ENCODE measurements at regions of chr12 and their contacts with region 1.

Region 1: GRCh38 chr12:114166362-114166761 is 200.2 kb upstream of the RBM19 start:
- DNase-seq: peak; percentile 38 to 71
- H3K4me3 ChIP-seq: no peak overlapping the region
- H3K27ac ChIP-seq: no peak overlapping the region
- H3K4me1 ChIP-seq: 0 out of 7 replicates have a peak, but pooled peaks cover 0 to 2% (median 0%) of the 10 kb centered on the region in 4 experiments
- H3K27me3 ChIP-seq: peaks cover 0 to 12% (median 3%) of the 10 kb centered on the region in 4 experiments; a peak in 4 of 7 replicates
- CTCF ChIP-seq: peak; percentile 62 to 86 (median 78)
- EP300 ChIP-seq: no peak
- POLR2A ChIP-seq: no peak
- RAD21 ChIP-seq: peak; percentile 94 to 97

Region 2: DNA sequence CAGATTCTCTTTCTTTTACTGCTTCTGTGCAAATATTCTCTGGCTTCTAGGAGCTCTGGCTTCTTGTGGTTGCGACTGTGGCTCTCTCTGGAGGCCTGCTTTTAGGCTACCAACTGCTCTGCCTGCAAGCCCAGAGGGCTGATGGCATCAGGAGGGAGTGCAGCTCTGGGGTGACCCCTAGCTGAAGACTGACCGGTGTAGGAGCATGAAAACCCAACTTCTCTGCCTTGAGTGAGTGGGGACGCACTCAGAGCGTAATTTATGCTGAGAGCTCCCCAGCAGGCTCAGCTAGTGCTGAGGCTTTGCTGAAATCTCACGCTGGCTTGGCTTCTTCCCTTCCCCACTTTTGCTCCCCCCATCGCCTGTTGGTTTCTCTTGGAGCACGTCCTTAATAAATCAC is 170.3 kb before region 1 on chr12:
- CTCF ChIA-PET with region 1: interaction called, 11 read pairs
- POLR2A ChIA-PET with region 1: no interaction called
- DNase-seq: peak; percentile 23 to 55
- H3K4me3 ChIP-seq: no peak overlapping the region
- H3K27ac ChIP-seq: no peak overlapping the region
- H3K4me1 ChIP-seq: no peaks in the 10 kb centered on the region
- H3K27me3 ChIP-seq: no peaks in the 10 kb centered on the region
- CTCF ChIP-seq: peak; percentile 52 to 77 (median 64)
- EP300 ChIP-seq: no peak
- POLR2A ChIP-seq: no peak
- RAD21 ChIP-seq: peak; percentile 57 to 68

Region 3: DNA sequence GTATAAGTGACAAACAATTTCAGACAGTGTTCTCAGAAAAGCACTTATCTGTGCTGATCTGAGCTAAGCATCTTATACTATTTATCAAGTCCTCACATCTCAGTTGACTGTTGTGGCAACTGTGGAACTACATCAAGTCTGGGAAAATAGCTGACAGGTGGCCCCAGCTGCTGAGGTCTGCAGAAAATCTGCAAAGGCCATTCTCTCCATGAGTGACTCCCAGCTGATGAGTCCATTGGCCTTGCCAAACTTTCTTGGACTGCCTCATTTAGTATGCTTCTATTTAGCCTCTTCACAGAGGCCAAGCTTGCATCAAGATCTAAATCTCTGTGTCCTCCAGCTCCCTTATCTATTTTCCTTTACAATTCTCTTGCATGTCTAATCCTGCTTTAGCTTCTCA is 25.8 kb before region 1 on chr12:
- CTCF ChIA-PET with region 1: interaction called, 13 read pairs
- POLR2A ChIA-PET with region 1: no interaction called
- DNase-seq: no peak
- H3K4me3 ChIP-seq: no peak overlapping the region
- H3K27ac ChIP-seq: no peak overlapping the region
- H3K4me1 ChIP-seq: no peaks in the 10 kb centered on the region
- H3K27me3 ChIP-seq: peaks cover 0 to 9% (median 1%) of the 10 kb centered on the region in 4 experiments; a peak in 4 of 7 replicates
- CTCF ChIP-seq: no peak
- EP300 ChIP-seq: no peak
- POLR2A ChIP-seq: no peak
- RAD21 ChIP-seq: no peak

Region 4: DNA sequence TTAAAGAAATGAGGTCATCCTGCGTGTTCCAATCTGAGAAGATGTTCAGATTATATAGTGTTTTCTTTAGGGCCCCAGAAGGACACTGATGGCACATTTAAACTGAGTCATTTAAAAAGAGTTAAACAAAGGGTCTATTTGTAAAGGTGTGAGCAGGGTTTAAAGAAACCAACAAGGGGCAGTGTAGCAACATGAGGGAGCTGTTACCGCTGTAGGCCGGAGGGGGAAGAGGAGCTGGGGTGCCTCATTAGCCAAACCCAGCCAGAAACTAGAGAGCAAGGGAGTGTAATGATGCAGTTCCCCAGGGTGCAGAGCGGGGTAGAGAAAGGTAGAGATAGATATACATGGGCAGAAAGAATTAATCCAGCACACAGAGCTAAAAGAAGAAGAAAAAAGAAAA is 79.2 kb after region 1 on chr12:
- CTCF ChIA-PET with region 1: interaction called, 29 read pairs
- POLR2A ChIA-PET with region 1: no interaction called
- DNase-seq: peak in 1 of 2 experiments; percentile 33
- H3K4me3 ChIP-seq: no peak overlapping the region
- H3K27ac ChIP-seq: no peak overlapping the region
- H3K4me1 ChIP-seq: no peaks in the 10 kb centered on the region
- H3K27me3 ChIP-seq: no peaks in the 10 kb centered on the region
- CTCF ChIP-seq: peak; percentile 52 to 92 (median 80)
- EP300 ChIP-seq: no peak
- POLR2A ChIP-seq: no peak
- RAD21 ChIP-seq: peak; percentile 84 to 92

Region 5: GRCh38 chr12:114355389-114356088 is 189.2 kb after region 1 on chr12:
- CTCF ChIA-PET with region 1: interaction called, 14 read pairs
- POLR2A ChIA-PET with region 1: no interaction called
- DNase-seq: peak in 1 of 2 experiments; percentile 87
- H3K4me3 ChIP-seq: no peak overlapping the region
- H3K27ac ChIP-seq: no peak overlapping the region
- H3K4me1 ChIP-seq: peaks cover 0 to 2% (median 0%) of the 10 kb centered on the region in 4 experiments; a peak in 2 of 7 replicates
- H3K27me3 ChIP-seq: no peaks in the 10 kb centered on the region; a peak in 1 of 7 replicates
- CTCF ChIP-seq: peak; percentile 82 to 97 (median 94)
- EP300 ChIP-seq: no peak
- POLR2A ChIP-seq: no peak
- RAD21 ChIP-seq: peak; percentile 82 to 87

Region 6: GRCh38 chr12:114476159-114476558 is 309.8 kb after region 1 on chr12:
- CTCF ChIA-PET with region 1: interaction called, 26 read pairs
- POLR2A ChIA-PET with region 1: no interaction called
- DNase-seq: no peak
- H3K4me3 ChIP-seq: no peak overlapping the region
- H3K27ac ChIP-seq: no peak overlapping the region
- H3K4me1 ChIP-seq: peaks cover 0 to 9% (median 0%) of the 10 kb centered on the region in 4 experiments; a peak in 2 of 7 replicates
- H3K27me3 ChIP-seq: peaks cover 21 to 45% (median 40%) of the 10 kb centered on the region in 4 experiments
- CTCF ChIP-seq: peak in 2 of 3 experiments; percentile 50 to 79; a peak in 3 of 4 replicates
- EP300 ChIP-seq: no peak
- POLR2A ChIP-seq: no peak
- RAD21 ChIP-seq: peak; percentile 68 to 73